Dendritic cell treated with granulocyte-macrophage colony-stimulating factor and Interleukin-4, amounts not matched to agents 40 ng/mL and 50 ng/mL, for 4 days (primary cell): ENCODE measurements at regions of chr4 and their contacts with region 1.

Region 1: GRCh38 chr4:70687821-70688794 is at the start of gene UTP3:
- H3K4me3 Mint-ChIP-seq: peak within 1 kb of the TSS; percentile 93
- H3K27ac Mint-ChIP-seq: peak within 1 kb of the TSS; percentile 99
- H3K4me1 Mint-ChIP-seq: peaks cover 33% of the 10 kb centered on the region
- H3K27me3 Mint-ChIP-seq: no peaks in the 10 kb centered on the region

Region 2: DNA sequence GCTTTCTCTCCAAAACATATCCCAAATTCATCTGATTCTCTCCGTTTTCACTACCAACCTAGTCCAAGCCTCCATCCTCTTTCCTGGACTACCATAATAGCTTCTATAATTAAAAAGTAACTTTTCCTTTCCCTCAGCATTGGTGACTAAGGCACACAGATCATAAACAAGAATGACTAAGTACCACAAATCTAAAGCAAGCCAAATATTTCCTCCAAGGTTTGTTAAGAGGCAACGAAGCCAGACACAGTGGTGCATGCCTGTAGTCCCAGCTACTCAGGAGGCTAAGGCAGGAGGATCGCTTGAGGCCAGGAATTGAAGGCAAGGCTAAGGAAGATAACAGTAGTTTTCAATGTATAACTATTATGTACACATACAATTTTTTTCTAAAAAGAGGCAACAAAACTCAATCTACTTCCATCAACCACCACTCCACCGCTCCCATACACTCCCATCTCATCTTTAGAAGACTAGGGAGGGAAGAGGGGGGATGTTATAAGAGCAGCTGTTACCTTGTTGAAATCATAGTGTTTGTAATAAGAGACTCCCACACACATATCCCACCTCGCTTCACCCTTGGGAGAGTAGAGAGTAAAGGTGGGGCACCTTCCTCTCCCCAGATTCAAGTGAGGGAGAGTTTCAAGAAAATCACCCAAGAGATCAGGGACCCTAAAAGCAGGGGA is 17.6 kb before region 1 on chr4:
- intact Hi-C with region 1: no loop called
- H3K4me3 Mint-ChIP-seq: no peak overlapping the region
- H3K27ac Mint-ChIP-seq: no peak overlapping the region
- H3K4me1 Mint-ChIP-seq: no peaks in the 10 kb centered on the region
- H3K27me3 Mint-ChIP-seq: no peaks in the 10 kb centered on the region

Region 3: GRCh38 chr4:70704331-70705145 is 16.4 kb after region 1 on chr4:
- intact Hi-C with region 1: loop called (anchors 1 kb)
- H3K4me3 Mint-ChIP-seq: peak overlapping the region; percentile 86
- H3K27ac Mint-ChIP-seq: peak overlapping the region; percentile 92
- H3K4me1 Mint-ChIP-seq: peaks cover 16% of the 10 kb centered on the region
- H3K27me3 Mint-ChIP-seq: no peaks in the 10 kb centered on the region

Region 4: DNA sequence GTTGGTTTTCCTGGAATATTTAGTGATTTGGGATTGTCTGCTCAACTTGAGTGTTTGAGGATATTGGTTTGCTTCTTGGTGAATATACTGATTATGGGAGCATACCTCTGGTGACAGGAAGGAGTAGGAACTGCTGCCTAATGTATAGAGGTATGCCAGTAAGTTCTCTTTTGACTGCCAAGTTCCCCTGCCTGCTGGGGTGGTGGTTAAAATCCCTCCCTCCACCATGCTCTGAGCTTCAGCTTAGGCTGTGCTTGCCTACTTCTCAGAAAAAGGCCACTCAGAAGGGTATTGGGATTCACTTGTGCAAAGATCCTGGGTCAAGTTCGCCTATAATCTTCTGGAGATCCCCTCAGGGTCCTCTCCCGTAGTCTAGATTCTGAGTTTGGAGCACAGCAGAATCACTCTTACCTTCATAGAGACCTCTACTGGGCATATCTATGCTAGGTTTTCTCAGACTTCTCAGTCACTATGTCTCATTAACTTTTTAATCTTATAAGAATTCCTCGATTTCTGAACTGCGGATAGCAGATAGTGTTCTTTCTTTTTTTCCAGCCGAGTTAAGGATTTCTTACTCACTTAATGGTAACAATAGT is 260.7 kb after region 1 on chr4:
- intact Hi-C with region 1: loop called (anchors 5 kb)
- H3K4me3 Mint-ChIP-seq: peak overlapping the region; percentile 34
- H3K27ac Mint-ChIP-seq: peak overlapping the region; percentile 86
- H3K4me1 Mint-ChIP-seq: peaks cover 67% of the 10 kb centered on the region
- H3K27me3 Mint-ChIP-seq: no peaks in the 10 kb centered on the region

Region 5: GRCh38 chr4:70993181-70994068 is 305.3 kb after region 1 on chr4 and contains the start of gene DCK:
- intact Hi-C with region 1: loop called (anchors 5 kb)
- H3K4me3 Mint-ChIP-seq: peak within 1 kb of the TSS; percentile 97
- H3K27ac Mint-ChIP-seq: peak within 1 kb of the TSS; percentile 90
- H3K4me1 Mint-ChIP-seq: peaks cover 34% of the 10 kb centered on the region
- H3K27me3 Mint-ChIP-seq: no peaks in the 10 kb centered on the region

Region 6: GRCh38 chr4:71062436-71062835 is 374.3 kb after region 1 on chr4:
- intact Hi-C with region 1: no loop called
- H3K4me3 Mint-ChIP-seq: no peak overlapping the region
- H3K27ac Mint-ChIP-seq: no peak overlapping the region
- H3K4me1 Mint-ChIP-seq: no peaks in the 10 kb centered on the region
- H3K27me3 Mint-ChIP-seq: no peaks in the 10 kb centered on the region

Region 7: GRCh38 chr4:71584585-71584984 is 896.5 kb after region 1 on chr4:
- intact Hi-C with region 1: no loop called
- H3K4me3 Mint-ChIP-seq: no peak overlapping the region
- H3K27ac Mint-ChIP-seq: no peak overlapping the region
- H3K4me1 Mint-ChIP-seq: no peaks in the 10 kb centered on the region
- H3K27me3 Mint-ChIP-seq: no peaks in the 10 kb centered on the region